Activated CD4-positive, alpha-beta memory T cell treated with anti-CD3 and anti-CD28 coated beads, Interleukin-2, amount 10 ng/mL, durations not matched to agents 7 days and 5 days (primary cell): ENCODE measurements at regions of chr15 and their contacts with region 1.

Region 1: GRCh38 chr15:98881526-98882520 is 125.8 kb downstream of the PGPEP1L start:
- DNase-seq: no peak
- H3K4me3 Mint-ChIP-seq: no peak overlapping the region
- H3K27ac Mint-ChIP-seq: no peak overlapping the region
- H3K4me1 Mint-ChIP-seq: no peaks in the 10 kb centered on the region
- H3K27me3 Mint-ChIP-seq: no peaks in the 10 kb centered on the region

Region 2: DNA sequence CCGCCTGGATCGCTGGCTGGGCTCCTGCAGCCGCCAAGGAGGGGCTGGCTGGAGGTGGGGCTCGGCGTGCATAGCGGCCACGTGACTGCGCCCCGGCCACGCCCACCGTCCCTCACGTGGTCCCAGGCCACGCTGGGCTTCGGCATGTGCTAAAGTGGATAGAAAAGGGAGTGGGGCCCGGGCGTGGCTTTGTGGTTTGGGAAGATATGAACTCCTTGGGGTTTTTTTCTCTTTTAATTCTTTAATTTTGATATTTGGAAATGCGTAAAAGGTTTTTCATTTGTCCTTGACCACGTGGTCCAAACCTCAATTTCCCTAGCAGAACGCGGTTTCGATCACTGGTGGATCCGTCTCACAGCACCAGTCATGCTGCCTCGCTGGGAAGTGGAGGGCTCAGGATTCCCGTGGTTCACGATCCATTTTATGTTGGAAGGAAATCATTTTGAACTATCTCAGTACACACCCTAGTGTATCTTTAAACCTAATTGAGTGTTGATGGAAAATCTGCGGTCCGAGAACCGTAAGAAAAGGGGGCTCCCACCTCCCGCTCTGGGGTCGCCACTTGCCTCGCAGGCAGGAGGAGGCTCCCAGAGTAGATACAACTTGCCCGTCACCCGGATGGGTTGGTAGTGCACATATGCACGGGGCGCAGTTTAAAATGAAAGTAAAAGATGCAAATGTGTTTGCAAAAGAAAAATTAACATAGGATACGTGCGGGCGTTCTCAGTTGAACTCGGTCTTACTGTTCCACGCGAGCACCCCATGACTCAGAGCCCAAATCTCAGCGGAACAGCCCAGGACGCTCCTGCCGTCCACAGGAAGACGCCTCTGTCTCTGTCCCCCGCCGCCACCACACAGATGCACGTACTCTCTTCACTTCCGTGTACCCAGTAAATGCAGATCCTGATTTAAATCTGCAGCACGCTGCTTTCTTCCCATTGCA is 16.2 kb before region 1 on chr15:
- CTCF ChIA-PET with region 1: interaction called, 11 read pairs
- POLR2A ChIA-PET with region 1: interaction called, 4 read pairs
- DNase-seq: peak; percentile 76
- H3K4me3 Mint-ChIP-seq: peak overlapping the region; percentile 66
- H3K27ac Mint-ChIP-seq: peak overlapping the region; percentile 84
- H3K4me1 Mint-ChIP-seq: peaks cover 21% of the 10 kb centered on the region
- H3K27me3 Mint-ChIP-seq: peaks cover 3% of the 10 kb centered on the region